Psoas muscle (tissue), 8 donors: ENCODE measurements at regions of chr2 and their contacts with region 1.

Region 1: DNA sequence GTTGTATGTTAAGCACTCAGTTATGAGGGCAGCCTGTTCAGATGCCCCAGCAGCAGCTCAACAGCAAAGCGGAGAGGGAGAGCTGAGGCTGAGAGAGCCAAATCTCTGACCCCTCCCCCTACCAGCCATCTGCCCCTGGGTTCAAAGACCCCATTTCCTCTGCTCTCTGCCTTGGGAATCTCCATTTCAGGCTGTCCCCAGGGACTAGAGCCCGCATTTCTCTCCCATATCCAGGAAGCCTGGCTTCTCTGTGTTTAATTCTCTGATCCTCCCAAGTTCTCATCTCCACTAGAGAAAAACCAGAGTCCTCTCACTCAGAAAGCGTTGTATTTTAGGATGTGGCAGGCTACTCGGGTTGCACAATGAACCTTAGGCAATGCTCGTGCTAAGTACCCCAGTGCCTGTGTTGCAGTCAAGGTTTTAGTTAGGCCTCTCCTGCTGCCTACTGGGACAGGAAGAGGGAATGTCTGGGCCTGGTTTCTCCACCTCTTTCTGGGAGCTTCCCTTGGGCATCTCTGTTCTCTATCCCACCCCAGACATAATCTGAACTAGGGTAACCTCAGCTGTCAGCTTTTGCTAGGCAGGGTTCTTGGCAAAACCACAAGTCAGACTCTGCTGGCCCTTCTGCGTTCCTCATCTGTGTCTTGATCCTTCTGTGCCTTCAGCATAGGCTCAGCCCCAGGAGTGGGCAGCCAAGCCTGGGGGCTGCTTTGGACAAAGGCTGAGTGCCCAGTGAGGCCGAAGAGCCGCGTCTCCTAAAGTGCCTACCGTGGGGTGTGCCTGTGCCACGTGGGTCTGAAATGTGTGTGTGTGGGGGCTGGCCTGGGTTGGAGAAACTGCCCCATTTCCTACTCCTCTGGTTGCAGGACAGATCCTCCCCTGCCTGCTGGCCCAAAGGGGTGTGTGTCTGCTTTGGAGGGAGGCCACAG is 96.8 kb downstream of the STPG4 start:
- DNase-seq: peak; percentile 62 to 77
- ATAC-seq: peak in 3 of 4 donors; percentile 38 to 74 (median 71)
- H3K4me3 ChIP-seq: no peak overlapping the region
- H3K27ac ChIP-seq: peak overlapping the region; percentile 74
- H3K4me1 ChIP-seq: peaks cover 81% of the 10 kb centered on the region
- H3K27me3 ChIP-seq: no peaks in the 10 kb centered on the region
- CTCF ChIP-seq: no peak

Region 2: DNA sequence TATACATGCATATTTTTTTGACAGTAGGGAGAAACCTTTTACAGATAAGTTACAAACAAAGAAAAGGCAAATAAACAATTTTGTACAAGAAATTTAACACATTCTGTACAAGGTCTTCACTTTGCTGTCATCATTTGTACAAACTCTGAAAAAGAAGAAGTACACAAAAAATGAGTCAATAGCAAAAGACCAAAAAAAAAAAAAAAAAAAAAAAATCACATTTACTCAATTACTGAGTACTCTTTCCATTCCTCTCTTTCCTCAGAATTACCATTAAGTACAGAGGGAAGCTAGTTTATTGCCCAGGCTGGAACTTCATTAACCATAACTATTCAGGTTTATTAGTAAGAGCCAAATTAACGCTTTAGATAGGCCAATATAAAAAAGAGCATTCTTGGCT is 102.4 kb after region 1 on chr2:
- intact Hi-C with region 1: loop called in 1 of 2 experiments (anchors 5 kb)
- DNase-seq: no peak
- ATAC-seq: no peak
- H3K4me3 ChIP-seq: no peak overlapping the region
- H3K27ac ChIP-seq: no peak overlapping the region
- H3K4me1 ChIP-seq: peaks cover 12% of the 10 kb centered on the region
- H3K27me3 ChIP-seq: no peaks in the 10 kb centered on the region
- CTCF ChIP-seq: no peak

Region 3: GRCh38 chr2:47174733-47175361 is 116.6 kb after region 1 on chr2:
- intact Hi-C with region 1: loop called in 1 of 2 experiments (anchors 5 kb)
- DNase-seq: no peak
- ATAC-seq: peak; percentile 35 to 50 (median 42)
- H3K4me3 ChIP-seq: peak overlapping the region; percentile 91
- H3K27ac ChIP-seq: peak overlapping the region; percentile 98
- H3K4me1 ChIP-seq: peaks cover 38% of the 10 kb centered on the region
- H3K27me3 ChIP-seq: no peaks in the 10 kb centered on the region
- CTCF ChIP-seq: no peak

Region 4: DNA sequence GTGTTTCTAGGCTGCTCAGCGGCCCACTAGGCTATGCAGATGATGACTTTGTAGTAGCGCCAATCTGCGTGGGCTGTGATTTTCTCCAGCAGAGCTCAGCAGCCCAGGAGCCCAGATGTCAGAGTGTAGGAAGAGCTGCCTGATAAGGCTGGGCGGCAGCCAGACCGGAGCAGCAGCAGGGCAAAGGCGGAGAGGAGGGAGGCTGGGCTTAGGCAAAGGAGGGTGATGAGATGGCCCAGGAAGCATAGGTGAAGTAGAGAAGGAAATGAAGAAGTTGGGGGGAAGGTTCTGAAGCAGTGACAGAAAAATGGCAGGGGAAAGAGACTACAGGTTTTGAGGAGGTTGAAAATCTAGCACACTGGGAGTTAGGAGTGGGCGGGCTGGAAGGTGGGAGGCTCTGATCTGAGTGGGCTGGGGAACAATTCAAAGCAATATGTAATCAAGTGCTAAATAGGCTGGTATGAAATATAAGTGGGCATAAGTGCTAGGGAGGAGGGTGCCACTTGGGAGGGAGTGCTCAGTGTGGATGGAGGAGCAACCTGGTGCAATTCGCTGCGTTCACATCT is 147.4 kb after region 1 on chr2:
- intact Hi-C with region 1: no loop called
- DNase-seq: no peak
- ATAC-seq: no peak
- H3K4me3 ChIP-seq: no peak overlapping the region
- H3K27ac ChIP-seq: no peak overlapping the region
- H3K4me1 ChIP-seq: no peaks in the 10 kb centered on the region
- H3K27me3 ChIP-seq: no peaks in the 10 kb centered on the region
- CTCF ChIP-seq: no peak